ENCODE measurements at regions of chr2 and their contacts with region 1.

Region 1: DNA sequence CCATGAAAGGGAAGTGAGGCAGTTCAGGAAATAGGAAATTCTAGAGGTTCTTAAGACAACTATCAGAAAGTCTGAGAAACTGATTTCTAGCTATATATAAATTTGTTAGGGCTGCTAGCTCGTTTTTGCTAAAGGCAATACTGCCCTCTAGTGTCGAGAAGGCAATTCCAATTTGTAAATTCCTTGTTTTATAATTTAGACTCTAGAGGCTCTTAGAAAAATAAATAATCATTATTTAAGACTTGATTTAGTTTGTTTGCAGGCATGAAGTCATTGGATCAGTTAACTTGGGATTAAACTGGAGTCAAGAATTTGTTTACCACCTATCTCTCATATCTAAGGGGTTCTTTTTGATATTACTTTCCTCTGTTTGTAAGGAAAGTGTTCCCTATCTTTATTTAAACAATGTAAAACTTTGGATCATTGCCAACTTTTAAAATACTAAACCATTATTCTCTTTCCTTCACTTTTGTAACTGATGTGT is 66.2 kb downstream of the ACVR2A start:
- DNase-seq: peak; percentile 26
- H3K4me3 ChIP-seq: no peak overlapping the region
- H3K27ac ChIP-seq: no peak overlapping the region
- H3K4me1 ChIP-seq: no peaks in the 10 kb centered on the region
- H3K27me3 ChIP-seq: no peaks in the 10 kb centered on the region
- CTCF ChIP-seq: peak; percentile 72

Region 2: DNA sequence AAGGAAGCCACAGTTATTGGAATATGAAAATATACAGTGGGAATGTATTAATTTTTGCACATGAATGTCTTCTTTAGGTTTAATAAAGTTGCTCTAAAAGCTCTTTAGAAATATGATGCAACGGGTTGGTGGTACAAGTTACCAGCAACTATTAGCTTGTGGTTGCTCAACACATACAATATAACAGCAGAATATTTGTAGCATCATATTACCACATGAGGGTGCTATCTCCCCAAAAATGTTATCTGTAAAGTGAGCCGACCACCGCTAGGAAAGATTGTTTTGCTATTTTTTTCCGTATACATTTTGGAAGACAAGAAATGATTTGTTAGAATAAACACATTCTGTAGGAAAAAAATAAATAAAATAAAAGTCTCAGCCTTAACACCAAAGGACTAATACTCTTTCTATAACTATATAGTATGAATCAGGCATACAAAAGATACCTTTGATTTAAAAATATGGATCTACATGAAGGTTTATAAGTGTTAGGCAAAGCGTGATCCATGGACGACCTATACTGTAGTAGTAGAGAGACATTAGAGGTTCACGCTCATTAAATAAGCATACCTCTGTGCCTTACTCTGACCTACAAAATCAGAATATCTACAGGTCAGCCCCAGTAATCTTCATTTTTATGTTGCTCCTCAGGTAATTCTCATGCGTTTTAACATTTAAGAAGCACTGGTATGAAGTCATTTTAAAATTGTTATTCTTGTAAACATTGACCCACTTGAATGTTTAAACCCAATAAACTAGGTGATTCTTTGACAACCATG is 1176.8 kb before region 1 on chr2:
- intact Hi-C with region 1: loop called (anchors 10 kb)
- DNase-seq: no peak
- H3K4me3 ChIP-seq: no peak overlapping the region
- H3K27ac ChIP-seq: no peak overlapping the region
- H3K4me1 ChIP-seq: no peaks in the 10 kb centered on the region
- H3K27me3 ChIP-seq: no peaks in the 10 kb centered on the region
- CTCF ChIP-seq: peak; percentile 20

Region 3: GRCh38 chr2:147082850-147083522 is 828.0 kb before region 1 on chr2:
- intact Hi-C with region 1: loop called (anchors 5 kb)
- DNase-seq: peak; percentile 75
- H3K4me3 ChIP-seq: no peak overlapping the region
- H3K27ac ChIP-seq: no peak overlapping the region
- H3K4me1 ChIP-seq: no peaks in the 10 kb centered on the region
- H3K27me3 ChIP-seq: no peaks in the 10 kb centered on the region
- CTCF ChIP-seq: peak; percentile 88

Region 4: GRCh38 chr2:147331790-147332419 is 579.1 kb before region 1 on chr2:
- intact Hi-C with region 1: loop called (anchors 10 kb)
- DNase-seq: peak; percentile 42
- H3K4me3 ChIP-seq: no peak overlapping the region
- H3K27ac ChIP-seq: no peak overlapping the region
- H3K4me1 ChIP-seq: no peaks in the 10 kb centered on the region
- H3K27me3 ChIP-seq: no peaks in the 10 kb centered on the region
- CTCF ChIP-seq: peak; percentile 29

Region 5: GRCh38 chr2:147792966-147793623 is 117.9 kb before region 1 on chr2:
- intact Hi-C with region 1: no loop called
- DNase-seq: no peak
- H3K4me3 ChIP-seq: no peak overlapping the region
- H3K27ac ChIP-seq: no peak overlapping the region
- H3K4me1 ChIP-seq: no peaks in the 10 kb centered on the region
- H3K27me3 ChIP-seq: no peaks in the 10 kb centered on the region
- CTCF ChIP-seq: no peak